ACHN (cell line): ENCODE measurements at regions of chr2 and their contacts with region 1.

Region 1: GRCh38 chr2:186503848-186504606 is 18.0 kb downstream of the ZC3H15 start:
- DNase-seq: peak; percentile 59

Region 2: DNA sequence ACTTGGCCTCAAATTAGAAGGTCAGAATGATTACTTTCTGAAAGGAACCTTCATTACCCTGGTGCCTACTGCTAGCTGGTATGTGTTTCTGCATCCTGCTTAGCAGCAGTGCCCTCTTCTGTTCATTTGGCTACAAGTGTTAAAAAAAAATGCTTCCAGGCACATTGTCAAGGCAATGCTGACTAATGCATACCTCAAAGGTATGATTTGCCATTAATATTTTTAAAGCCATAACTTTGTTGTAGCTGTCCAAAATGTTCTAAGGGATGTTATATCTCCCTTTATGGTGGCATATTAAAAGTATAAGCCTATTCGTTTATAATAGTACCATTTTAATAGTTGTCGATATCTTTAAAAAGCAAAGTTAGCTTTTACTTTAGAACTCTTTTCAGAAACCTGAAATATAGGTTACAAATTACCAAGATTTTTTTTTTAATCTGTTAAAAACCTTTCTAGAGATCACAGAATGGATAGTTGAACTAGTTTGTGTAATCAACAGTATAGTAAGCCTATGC is 137.8 kb after region 1 on chr2:
- in situ Hi-C with region 1: loop called (anchors 25 kb)
- DNase-seq: peak; percentile 74

Region 3: GRCh38 chr2:186695081-186695756 is 191.2 kb after region 1 on chr2:
- in situ Hi-C with region 1: no loop called
- DNase-seq: peak; percentile 39

Region 4: DNA sequence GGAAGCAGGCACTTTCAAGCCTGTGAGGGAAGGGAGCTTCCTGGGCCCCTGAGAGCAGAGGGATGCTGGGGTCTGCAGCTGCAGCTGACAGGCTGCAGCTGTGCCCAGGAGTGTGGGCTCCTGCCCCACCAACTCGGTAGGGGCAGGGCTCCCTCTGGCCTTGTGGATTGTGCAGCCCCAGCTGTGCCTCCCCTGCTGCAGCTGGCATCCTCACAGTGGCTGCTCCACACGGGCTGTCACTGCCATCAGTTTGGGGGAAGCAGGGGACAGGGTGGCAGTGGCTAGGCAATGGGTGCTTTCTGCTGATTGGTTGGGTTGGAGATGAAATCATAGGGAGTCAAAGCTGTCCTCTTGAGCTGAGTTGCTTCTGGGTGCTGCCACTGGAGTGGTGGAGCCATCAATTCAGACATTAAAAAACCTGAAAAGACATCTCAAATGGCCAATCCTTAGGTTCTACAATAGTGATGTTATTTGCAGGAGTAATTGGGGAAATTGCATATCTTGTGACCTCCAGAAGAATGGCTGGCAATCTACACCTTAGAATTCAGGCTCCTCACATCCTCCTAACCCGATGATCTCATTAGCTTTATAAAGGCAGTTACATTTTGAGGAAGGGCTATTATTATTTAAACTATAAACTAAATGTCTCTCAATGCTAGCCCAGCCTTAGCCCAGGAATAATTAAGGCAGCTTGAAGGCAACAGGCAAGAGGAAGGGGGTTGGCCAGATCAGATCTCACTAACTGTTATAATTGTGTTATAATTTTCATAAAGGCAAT is 231.1 kb after region 1 on chr2:
- in situ Hi-C with region 1: no loop called
- DNase-seq: no peak